Left ventricle myocardium inferior (tissue), 1 donor: ENCODE measurements at regions of chr9 and their contacts with region 1.

Region 1: DNA sequence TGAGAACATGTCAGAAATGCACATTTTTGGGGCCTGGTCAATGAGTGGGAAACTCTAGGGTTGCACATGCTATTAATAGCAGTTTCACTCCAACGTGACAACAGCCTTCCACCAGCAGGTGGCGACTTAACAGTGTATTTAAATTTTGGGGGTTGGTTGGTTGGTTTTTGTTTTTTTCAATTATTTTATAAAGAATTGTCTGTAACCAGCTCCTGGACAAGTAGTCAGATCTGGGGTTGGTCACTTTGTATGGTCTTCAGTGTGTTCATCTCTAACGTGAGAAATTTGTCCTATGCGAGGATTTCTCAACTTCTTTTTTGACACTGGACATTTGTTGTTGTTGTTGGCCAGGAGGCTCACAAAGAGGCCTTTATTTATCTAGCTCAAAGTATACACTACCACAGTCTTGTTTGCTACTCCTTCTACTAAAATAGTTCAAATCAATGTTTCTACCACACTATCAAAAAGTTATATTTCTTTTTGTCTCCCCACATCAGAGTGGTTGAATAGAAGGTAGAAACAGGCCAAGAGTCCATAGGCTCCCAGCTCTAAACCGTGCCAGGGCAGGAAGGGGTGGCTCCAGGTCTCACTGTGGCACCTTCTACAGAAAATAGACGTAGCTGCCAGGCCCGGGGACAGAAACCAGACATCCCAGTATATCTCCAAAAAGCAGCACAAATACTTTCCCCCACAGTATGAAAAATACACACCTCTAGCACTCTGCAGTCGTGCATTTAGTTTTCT is 110.4 kb downstream of the TRPM6 start:
- DNase-seq: peak; percentile 44
- H3K4me3 ChIP-seq: no peak overlapping the region
- H3K27ac ChIP-seq: no peak overlapping the region
- H3K4me1 ChIP-seq: peaks cover 5% of the 10 kb centered on the region
- H3K27me3 ChIP-seq: peaks cover 9% of the 10 kb centered on the region
- CTCF ChIP-seq: peak; percentile 85

Region 2: GRCh38 chr9:75001719-75002422 is 224.6 kb after region 1 on chr9:
- intact Hi-C with region 1: loop called (anchors 2 kb)
- DNase-seq: no peak
- H3K4me3 ChIP-seq: no peak overlapping the region
- H3K27ac ChIP-seq: no peak overlapping the region
- H3K4me1 ChIP-seq: peaks cover 5% of the 10 kb centered on the region
- H3K27me3 ChIP-seq: no peaks in the 10 kb centered on the region
- CTCF ChIP-seq: peak; percentile 84

Region 3: DNA sequence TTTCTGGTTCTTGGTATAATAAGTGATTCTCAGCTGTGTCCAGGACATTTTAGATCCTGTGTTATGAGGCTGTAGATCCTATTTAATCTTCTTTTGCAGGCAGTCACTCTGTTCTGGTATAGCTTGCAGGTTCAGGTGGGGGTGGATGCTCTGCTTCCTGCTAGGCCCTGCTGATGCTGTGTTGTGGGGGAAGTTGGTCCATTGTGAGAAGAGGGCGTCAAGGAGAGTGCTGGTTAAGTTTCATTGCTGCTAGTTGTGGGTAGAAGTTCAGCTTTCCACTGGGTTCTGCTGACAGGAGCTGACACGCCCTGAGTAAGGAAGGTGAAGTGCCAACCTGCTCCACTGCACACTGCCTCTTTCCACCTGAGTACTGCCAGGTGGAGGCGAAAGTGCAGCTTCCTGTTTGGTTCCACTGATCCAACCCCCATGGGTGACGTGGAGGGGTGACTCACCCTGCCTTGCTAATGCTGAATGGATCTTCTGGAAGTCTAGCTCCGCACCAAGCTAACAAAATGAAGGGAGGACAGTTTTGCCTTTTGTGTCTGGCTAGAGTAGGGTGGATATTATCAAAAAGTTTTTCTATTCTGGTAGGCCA is 294.3 kb after region 1 on chr9:
- intact Hi-C with region 1: loop called (anchors 5 kb)
- DNase-seq: no peak
- H3K4me3 ChIP-seq: no peak overlapping the region
- H3K27ac ChIP-seq: no peak overlapping the region
- H3K4me1 ChIP-seq: no peaks in the 10 kb centered on the region
- H3K27me3 ChIP-seq: no peaks in the 10 kb centered on the region
- CTCF ChIP-seq: no peak